ENCODE measurements at regions of chr13 and their contacts with region 1.

Region 1: DNA sequence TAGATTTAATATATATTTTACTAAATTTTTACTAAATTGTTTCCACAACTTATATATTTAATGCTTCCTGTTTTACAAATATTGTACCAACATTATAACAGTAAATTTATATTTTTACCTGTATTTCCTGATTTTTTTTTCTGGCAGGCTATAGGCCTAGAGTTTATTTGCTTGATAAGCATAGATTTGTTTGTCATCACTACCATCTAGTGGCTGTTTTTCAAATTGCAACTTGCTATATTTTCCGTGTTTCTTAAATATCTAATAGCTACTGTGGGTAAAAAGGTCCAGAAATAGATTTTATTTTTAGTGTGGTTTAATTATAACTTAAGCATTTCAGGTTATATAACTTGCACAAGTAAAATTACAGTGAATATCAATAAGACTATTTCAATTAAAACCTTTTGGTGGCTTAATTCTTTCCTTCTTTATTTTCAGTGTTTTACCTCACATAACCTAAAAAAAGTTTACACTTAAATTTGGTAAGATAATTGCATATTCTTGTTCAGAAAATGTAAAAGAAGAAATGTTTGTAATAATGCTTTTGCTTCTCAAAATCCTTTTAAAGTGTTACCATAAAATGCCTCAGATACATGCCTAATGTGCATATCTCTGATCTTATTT is 60.6 kb downstream of the NDFIP2 start:
- DNase-seq: no peak
- H3K4me3 ChIP-seq: no peak overlapping the region
- H3K27ac ChIP-seq: peak overlapping the region in 25 of 59 donors; percentile 0 to 67 (median 50)
- H3K27me3 ChIP-seq: no peaks in the 10 kb centered on the region
- CTCF ChIP-seq: peak; percentile 79 to 100 (median 95)

Region 2: DNA sequence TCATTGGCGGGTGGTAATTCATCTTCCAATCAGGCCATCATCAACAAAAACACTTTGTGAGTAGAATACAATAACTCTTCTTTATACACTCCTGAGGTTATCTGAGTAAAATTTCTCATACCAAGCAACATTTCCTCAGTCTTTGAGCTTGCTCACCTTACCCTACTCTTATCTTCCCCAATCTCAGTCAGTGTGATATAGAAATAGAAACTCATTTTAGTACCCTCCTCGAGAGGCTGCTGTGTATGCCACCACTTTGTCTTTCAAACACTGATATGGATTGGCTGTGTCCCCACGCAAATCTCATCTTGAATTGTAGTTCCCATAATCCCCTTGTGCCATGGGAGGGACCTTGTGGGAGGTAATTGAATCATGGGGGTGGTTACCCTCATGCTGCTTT is 345.2 kb before region 1 on chr13:
- intact Hi-C with region 1: no loop called
- DNase-seq: no peak
- H3K4me3 ChIP-seq: no peak overlapping the region
- H3K27ac ChIP-seq: no peak overlapping the region
- H3K27me3 ChIP-seq: no peaks in the 10 kb centered on the region
- CTCF ChIP-seq: no peak

Region 3: GRCh38 chr13:79405829-79406596 is 135.5 kb before region 1 on chr13 and contains the start of gene RBM26:
- intact Hi-C with region 1: loop called in 1 of 2 experiments (anchors 5 kb)
- DNase-seq: peak; percentile 76 to 89 (median 88)
- H3K4me3 ChIP-seq: peak within 1 kb of the TSS; percentile 64 to 98 (median 88)
- H3K27ac ChIP-seq: peak within 1 kb of the TSS; percentile 74 to 98 (median 95)
- H3K27me3 ChIP-seq: no peaks in the 10 kb centered on the region
- CTCF ChIP-seq: peak in 29 of 56 donors; percentile 0 to 50 (median 21)
- total RNA-seq, gene RBM26: 53.5 to 90.2 (median 73.7) TPM

Region 4: GRCh38 chr13:79423801-79424642 is 117.5 kb before region 1 on chr13:
- intact Hi-C with region 1: loop called (anchors 2 to 5 kb)
- DNase-seq: no peak
- H3K4me3 ChIP-seq: no peak overlapping the region
- H3K27ac ChIP-seq: peak overlapping the region in 1 of 59 donors; percentile 6
- H3K27me3 ChIP-seq: no peaks in the 10 kb centered on the region
- CTCF ChIP-seq: peak; percentile 64 to 93 (median 81)

Region 5: GRCh38 chr13:79604752-79605151 is 63.2 kb after region 1 on chr13:
- intact Hi-C with region 1: no loop called
- DNase-seq: no peak
- H3K4me3 ChIP-seq: no peak overlapping the region
- H3K27ac ChIP-seq: no peak overlapping the region
- H3K27me3 ChIP-seq: no peaks in the 10 kb centered on the region
- CTCF ChIP-seq: no peak